ENCODE measurements at regions of chr22 and their contacts with region 1.

Region 1: DNA sequence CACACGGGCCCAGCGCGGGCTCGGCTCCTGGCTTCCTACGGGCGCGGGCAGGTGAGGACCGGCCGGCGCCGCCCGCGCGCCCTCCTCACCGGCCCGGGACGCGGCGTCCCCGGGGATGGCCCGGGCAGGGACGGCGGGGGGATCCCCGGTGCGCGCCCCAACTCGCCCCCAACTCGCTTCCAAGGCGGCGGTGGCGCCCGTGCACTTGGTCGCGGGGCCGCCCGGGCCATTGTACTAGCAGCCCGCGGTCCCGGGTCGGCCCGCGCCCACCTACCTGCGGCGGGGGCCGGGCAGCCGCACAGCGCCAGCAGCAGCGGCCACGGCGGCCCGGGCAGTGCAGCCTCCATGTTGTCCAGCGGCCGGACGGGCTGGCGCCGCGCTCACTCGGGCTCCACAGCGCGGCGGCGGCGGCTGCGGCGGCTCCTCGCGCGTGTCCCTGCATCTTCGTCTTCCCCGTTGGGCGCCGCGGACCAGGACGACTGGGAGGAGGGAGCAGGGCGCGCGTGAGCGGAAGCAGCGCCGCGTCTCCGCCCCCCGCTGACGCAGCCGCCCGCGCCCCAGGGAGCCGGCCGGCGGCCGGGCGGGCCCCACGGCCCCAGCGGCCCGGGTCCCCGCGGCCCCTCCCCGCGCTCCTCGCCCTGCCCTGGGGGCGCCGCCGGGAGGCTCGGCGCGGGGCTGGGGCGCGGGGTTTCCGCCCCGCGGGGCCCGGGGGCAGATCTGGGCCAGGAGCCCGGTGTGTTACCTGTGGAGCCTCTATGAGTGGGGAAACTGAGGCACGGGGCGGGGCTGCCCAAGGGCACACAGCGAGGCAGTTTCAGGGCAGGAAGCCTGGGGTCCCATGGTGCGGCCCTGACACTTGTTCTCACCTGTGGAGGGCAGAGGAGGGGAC is 159.3 kb upstream of the GRK3 start:
- DNase-seq: peak; percentile 73
- H3K4me3 Mint-ChIP-seq: peak overlapping the region; percentile 84
- H3K27ac Mint-ChIP-seq: no peak overlapping the region
- H3K4me1 Mint-ChIP-seq: peaks cover 32% of the 10 kb centered on the region
- H3K27me3 Mint-ChIP-seq: peaks cover 4% of the 10 kb centered on the region

Region 2: GRCh38 chr22:25362215-25362882 is 42.8 kb before region 1 on chr22:
- intact Hi-C with region 1: loop called (anchors 2 kb)
- DNase-seq: peak; percentile 57
- H3K4me3 Mint-ChIP-seq: no peak overlapping the region
- H3K27ac Mint-ChIP-seq: no peak overlapping the region
- H3K4me1 Mint-ChIP-seq: peaks cover 9% of the 10 kb centered on the region
- H3K27me3 Mint-ChIP-seq: no peaks in the 10 kb centered on the region